PC-9 (cell line): ENCODE measurements at regions of chr15 and their contacts with region 1.

Region 1: DNA sequence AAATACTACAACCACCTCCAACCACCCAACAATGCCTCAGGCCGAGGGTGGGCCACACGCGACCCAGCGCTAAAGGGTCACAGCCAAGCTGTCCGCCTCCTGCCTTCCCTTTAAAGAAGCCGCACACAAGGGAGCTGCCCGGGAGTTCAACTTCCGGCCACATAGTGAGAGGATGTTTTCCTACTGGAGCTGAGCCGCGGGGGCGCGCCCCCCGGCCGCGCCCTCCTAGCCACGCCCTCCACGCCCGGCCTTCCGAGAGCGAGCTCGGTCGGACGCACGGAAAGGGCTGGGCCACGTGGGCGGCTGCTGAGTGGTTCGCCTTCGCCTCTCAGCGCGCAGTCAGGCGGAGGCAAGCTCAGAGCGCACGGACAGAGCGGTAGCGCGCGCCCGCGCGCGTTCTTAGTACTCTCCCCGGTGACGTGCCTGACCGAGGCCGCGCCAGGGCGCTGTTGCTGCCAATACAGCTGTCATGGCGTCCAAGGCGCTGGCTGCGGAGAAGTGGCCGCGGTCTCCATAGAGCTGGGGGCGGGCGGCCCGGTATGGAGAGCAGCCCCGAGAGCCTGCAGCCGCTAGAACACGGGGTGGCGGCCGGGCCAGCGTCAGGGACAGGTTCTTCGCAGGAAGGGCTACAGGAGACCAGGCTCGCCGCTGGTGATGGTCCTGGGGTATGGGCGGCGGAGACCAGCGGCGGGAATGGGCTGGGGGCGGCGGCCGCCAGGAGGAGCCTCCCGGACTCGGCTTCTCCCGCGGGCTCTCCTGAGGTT is at the start of gene MINDY2:
- DNase-seq: peak; percentile 92 to 97
- H3K4me3 ChIP-seq: peak within 1 kb of the TSS; percentile 80
- H3K27ac ChIP-seq: peak within 1 kb of the TSS; percentile 87
- H3K4me1 ChIP-seq: peaks cover 37% of the 10 kb centered on the region
- H3K27me3 ChIP-seq: no peaks in the 10 kb centered on the region
- CTCF ChIP-seq: no peak; the same call in 1 of the 2 replicates
- total RNA-seq, gene MINDY2: 18.4 and 22.8 TPM in 2 replicates

Region 2: DNA sequence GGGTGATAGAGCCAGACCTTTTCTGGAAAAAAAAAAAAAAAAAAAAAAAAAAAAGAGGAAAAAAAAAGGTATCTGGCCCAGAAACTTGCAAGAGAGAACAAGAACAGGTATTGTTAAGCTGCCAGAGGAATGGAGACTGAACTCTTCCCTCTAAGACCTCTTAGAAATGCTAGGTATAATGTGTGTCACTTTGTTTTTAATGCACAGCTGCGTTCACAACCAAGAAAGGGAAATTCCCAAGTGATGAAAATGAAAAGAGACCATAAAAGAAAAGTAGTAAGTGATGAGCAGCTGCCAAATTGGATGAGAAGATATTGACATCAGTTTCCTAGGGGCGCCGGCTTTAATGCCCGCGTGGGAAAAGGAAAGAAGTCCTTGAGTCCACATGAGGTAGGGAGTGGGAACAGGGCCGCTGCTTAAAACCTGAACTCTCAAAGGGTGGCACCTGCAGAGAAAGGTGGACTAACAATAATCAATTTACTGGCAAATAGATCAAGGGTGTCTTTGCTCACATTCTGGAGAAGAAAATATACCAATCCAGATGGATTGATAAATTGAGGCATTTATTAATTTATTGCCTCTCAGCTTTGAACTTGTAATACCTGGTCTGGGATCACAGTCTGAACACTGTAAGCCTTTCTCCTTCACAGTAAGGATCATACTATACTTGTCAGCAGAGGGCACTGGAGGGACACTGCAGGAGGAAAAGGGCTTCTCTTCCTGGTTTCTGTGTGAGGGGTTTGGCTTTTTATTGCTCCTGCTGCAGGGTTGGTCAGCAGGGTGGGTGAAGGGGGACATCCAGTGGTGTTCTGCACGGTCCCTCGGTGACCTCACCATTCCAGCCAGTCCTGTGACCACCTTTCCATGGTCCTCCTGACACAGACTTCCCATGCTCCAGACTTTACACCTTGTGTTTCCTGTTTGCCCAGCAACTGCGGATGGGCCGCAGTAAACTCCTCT is 501.3 kb before region 1 on chr15:
- CTCF ChIA-PET with region 1: no interaction called
- POLR2A ChIA-PET with region 1: interaction called, 4 read pairs
- intact Hi-C with region 1: loop called (anchors 10 kb)
- DNase-seq: peak; percentile 44 to 62
- H3K4me3 ChIP-seq: no peak overlapping the region
- H3K27ac ChIP-seq: peak overlapping the region; percentile 39
- H3K4me1 ChIP-seq: peaks cover 34% of the 10 kb centered on the region
- H3K27me3 ChIP-seq: no peaks in the 10 kb centered on the region
- CTCF ChIP-seq: peak; percentile 74

Region 3: DNA sequence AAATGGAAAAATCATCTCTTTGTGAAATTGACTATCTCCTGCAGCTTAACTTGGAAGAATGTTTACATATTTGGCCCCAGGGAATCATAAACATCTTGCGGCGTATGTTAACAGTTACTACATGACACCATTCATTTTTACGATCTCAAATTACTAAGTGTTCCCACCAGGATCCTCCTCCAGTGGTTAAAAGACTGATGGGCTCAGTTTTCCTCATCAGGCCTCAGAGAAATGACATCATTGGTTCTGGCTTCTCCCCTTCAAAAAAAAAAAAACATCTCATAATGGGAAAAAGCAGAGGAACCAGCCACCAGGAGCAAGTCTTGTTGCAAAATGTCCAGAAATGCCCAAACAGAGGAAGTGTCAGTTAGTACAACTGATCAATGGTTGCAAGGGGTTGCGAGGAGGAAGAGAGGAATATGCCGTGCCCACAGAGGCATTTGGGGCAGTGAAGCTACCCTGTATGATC is 409.7 kb before region 1 on chr15:
- CTCF ChIA-PET with region 1: no interaction called
- POLR2A ChIA-PET with region 1: no interaction called
- intact Hi-C with region 1: no loop called
- DNase-seq: peak in 1 of 2 experiments; percentile 87
- H3K4me3 ChIP-seq: no peak overlapping the region
- H3K27ac ChIP-seq: peak overlapping the region; percentile 64
- H3K4me1 ChIP-seq: peaks cover 31% of the 10 kb centered on the region
- H3K27me3 ChIP-seq: no peaks in the 10 kb centered on the region
- CTCF ChIP-seq: no peak

Region 4: GRCh38 chr15:58521293-58521991 is 249.6 kb before region 1 on chr15:
- CTCF ChIA-PET with region 1: no interaction called
- POLR2A ChIA-PET with region 1: no interaction called
- intact Hi-C with region 1: loop called (anchors 1 kb)
- DNase-seq: peak; percentile 89 to 98
- H3K4me3 ChIP-seq: peak overlapping the region; percentile 49; the same call in 1 of the 2 replicates
- H3K27ac ChIP-seq: peak overlapping the region; percentile 97
- H3K4me1 ChIP-seq: peaks cover 50% of the 10 kb centered on the region
- H3K27me3 ChIP-seq: no peaks in the 10 kb centered on the region
- CTCF ChIP-seq: no peak

Region 5: GRCh38 chr15:58632789-58633188 is 138.2 kb before region 1 on chr15:
- CTCF ChIA-PET with region 1: no interaction called
- POLR2A ChIA-PET with region 1: interaction called, 13 read pairs
- intact Hi-C with region 1: no loop called
- DNase-seq: no peak
- H3K4me3 ChIP-seq: no peak overlapping the region
- H3K27ac ChIP-seq: no peak overlapping the region
- H3K4me1 ChIP-seq: no peaks in the 10 kb centered on the region
- H3K27me3 ChIP-seq: no peaks in the 10 kb centered on the region
- CTCF ChIP-seq: no peak

Region 6: GRCh38 chr15:58749532-58750337 is 21.3 kb before region 1 on chr15 and contains the start of gene ADAM10:
- CTCF ChIA-PET with region 1: no interaction called
- POLR2A ChIA-PET with region 1: interaction called, 33 read pairs
- intact Hi-C with region 1: loop called (anchors 1 kb)
- DNase-seq: peak; percentile 89 to 98
- H3K4me3 ChIP-seq: peak within 1 kb of the TSS; percentile 97
- H3K27ac ChIP-seq: peak within 1 kb of the TSS; percentile 79
- H3K4me1 ChIP-seq: peaks cover 20% of the 10 kb centered on the region
- H3K27me3 ChIP-seq: no peaks in the 10 kb centered on the region
- CTCF ChIP-seq: no peak
- total RNA-seq, gene ADAM10: 160 and 239 TPM in 2 replicates

Region 7: DNA sequence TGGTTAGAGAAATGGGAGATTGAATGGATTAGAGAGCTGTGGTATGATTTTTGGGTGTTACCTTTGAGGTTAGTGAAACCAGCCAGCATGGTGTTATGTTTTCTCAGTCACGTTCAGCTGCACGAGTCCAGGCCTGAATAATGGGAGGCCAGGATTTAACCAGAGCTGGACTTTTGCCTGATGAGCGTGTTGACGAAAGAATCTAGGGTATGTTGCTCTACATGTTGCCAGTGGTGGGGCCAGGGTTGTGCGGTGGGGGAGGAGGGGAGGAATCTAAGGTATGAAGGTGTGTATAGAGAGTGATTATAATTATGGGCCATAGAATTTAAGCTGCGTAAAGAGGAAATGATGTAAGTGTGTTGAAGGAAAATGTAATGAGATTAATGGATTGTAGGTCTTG is 22.8 kb after region 1 on chr15:
- CTCF ChIA-PET with region 1: no interaction called
- POLR2A ChIA-PET with region 1: interaction called, 20 read pairs
- intact Hi-C with region 1: no loop called
- DNase-seq: peak in 1 of 2 experiments; percentile 81
- H3K4me3 ChIP-seq: no peak overlapping the region
- H3K27ac ChIP-seq: peak overlapping the region; percentile 53; the same call in 1 of the 2 replicates
- H3K4me1 ChIP-seq: no peaks in the 10 kb centered on the region
- H3K27me3 ChIP-seq: no peaks in the 10 kb centered on the region
- CTCF ChIP-seq: no peak

Region 8: DNA sequence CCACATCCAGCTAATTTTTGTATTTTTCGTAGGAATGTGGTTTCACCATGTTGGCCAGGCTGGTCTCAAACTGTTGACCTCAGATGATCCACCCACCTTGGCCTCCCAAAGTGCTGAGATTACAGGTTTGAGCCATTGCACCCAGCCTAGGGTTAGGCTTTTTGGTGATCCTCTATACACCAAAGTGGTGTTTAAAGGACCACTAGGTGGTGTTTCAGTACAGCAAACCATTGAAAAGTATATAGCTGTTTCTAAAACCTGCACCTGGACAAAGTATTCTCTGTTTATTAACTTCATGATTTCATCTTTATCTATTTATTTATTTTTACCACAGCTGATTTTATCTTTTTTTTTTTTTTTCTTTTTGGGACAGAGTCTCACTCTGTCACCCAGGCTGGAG is 68.4 kb after region 1 on chr15:
- CTCF ChIA-PET with region 1: no interaction called
- POLR2A ChIA-PET with region 1: no interaction called
- intact Hi-C with region 1: no loop called
- DNase-seq: no peak
- H3K4me3 ChIP-seq: no peak overlapping the region
- H3K27ac ChIP-seq: no peak overlapping the region
- H3K4me1 ChIP-seq: no peaks in the 10 kb centered on the region
- H3K27me3 ChIP-seq: no peaks in the 10 kb centered on the region
- CTCF ChIP-seq: peak; percentile 43; the same call in 1 of the 2 replicates